Left ventricle myocardium superior (tissue), 1 donor: ENCODE measurements at regions of chr11 and their contacts with region 1.

Region 1: GRCh38 chr11:73661035-73661628 is 14.8 kb downstream of the PLEKHB1 start:
- DNase-seq: peak; percentile 94
- ATAC-seq: peak; percentile 96

Region 2: DNA sequence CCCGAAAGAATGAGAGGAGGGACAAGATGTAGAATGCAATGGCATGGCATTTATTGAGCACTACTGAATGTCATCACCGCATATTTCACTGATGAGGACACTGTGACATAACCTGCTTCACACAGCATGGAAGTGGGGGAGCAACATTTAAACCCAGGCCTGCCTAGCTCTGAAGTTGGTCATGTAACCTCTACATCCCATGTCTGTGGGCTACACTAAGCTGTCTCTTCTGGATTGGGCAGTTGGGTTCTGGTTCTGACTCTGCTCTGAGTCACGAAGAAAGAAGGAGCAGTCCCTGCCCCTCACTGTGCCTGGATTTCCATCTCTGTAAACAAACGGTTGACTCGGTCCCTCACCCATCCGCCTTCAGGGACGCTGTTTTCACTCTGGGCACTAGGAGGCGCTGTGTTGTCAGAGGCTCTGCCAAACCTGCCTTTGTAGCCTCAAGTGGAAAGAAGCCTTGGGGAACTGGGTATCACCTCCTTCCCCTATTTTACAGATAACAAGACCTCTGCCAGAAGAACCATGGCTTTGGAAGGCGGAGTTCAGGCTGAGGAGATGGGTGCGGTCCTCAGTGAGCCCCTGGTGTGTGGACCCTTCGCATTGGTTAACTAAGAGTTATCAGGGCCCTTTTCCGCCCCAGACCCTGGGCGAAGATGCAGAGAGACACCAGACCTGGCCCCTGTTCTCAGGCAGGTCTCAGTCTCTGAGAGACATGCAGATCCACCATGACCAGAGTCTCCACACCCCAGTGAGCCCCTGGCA is 365.7 kb before region 1 on chr11:
- intact Hi-C with region 1: no loop called
- DNase-seq: peak; percentile 68
- ATAC-seq: peak; percentile 49

Region 3: DNA sequence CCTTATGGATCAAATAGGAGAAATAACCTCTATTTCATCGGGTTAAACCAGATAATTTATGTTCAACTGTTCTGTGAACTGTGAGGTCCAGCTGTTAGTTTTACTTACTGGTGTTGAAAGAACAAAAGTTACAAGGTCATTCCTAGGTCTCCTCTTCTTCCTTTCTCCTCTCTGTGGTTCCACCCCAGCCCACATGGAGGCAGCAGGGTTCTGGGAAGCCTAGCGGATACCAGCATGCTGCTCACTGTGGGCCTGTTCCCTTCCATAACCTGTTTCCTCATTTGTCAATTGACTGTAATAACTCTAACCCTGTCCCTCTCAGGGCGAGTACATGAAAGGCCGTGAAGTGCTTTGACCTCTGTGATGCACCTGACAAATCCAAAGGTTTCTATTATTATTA is 257.1 kb before region 1 on chr11:
- intact Hi-C with region 1: loop called (anchors 10 kb)
- DNase-seq: peak; percentile 81
- ATAC-seq: peak; percentile 92

Region 4: GRCh38 chr11:73597956-73598718 is 63.0 kb before region 1 on chr11 and contains the start of gene FAM168A:
- intact Hi-C with region 1: no loop called
- DNase-seq: peak; percentile 99
- ATAC-seq: peak; percentile 99
- total RNA-seq, gene FAM168A: 30.6 TPM